Naive thymus-derived CD4-positive, alpha-beta T cell (primary cell): ENCODE measurements at regions of chr5 and their contacts with region 1.

Region 1: DNA sequence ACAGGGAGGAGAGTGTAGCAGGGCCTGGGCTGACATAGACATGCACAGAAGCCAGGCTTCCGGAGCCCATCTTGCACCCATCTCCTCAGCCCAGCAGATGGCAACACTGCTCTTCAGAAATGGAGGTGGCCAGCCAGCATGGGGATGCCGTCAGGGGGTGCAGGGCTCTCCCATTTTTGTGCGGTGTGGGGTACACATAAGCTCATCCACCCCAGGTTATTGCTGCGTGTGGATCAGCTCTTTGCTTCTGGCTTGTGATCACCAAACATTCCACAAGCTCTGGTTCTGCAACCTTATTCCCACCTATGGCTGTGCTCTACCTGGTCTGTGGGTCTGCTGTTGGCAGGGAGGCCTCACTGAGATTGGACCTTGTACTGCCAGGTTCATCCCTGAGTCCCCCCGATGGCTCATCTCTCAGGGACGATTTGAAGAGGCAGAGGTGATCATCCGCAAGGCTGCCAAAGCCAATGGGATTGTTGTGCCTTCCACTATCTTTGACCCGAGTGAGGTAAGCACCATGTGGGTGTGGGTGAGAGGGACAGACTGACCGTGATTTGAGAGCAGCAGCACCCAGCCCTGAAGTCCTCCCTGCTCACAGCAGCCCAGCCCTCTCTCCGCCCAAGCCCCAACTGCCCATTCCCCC is 17.3 kb downstream of the SLC22A5 start:
- DNase-seq: peak; percentile 60 to 81 (median 74)
- ATAC-seq: peak; percentile 88
- H3K4me3 ChIP-seq: no peak overlapping the region
- H3K4me3 Mint-ChIP-seq: peak overlapping the region in 3 of 10 donors; percentile 7 to 47 (median 22)
- H3K27ac ChIP-seq: no peak overlapping the region
- H3K27ac Mint-ChIP-seq: peak overlapping the region; percentile 1 to 83 (median 41)
- H3K4me1 ChIP-seq: peaks cover 15 to 19% of the 10 kb centered on the region in 2 donors
- H3K4me1 Mint-ChIP-seq: peaks cover 20 to 55% (median 29%) of the 10 kb centered on the region in 7 donors
- H3K27me3 ChIP-seq: no peaks in the 10 kb centered on the region
- H3K27me3 Mint-ChIP-seq: no peaks in the 10 kb centered on the region

Region 2: GRCh38 chr5:132410451-132411381 is 24.0 kb after region 1 on chr5:
- CTCF ChIA-PET with region 1: interaction called, 15 read pairs
- POLR2A ChIA-PET with region 1: interaction called, 25 read pairs
- intact Hi-C with region 1: loop called (anchors 1 kb)
- DNase-seq: peak; percentile 71 to 89 (median 84)
- ATAC-seq: peak; percentile 85
- H3K4me3 ChIP-seq: peak overlapping the region; percentile 81
- H3K4me3 Mint-ChIP-seq: peak overlapping the region; percentile 91 to 99 (median 98)
- H3K27ac ChIP-seq: peak overlapping the region; percentile 98
- H3K27ac Mint-ChIP-seq: peak overlapping the region; percentile 96 to 99 (median 99)
- H3K4me1 ChIP-seq: peaks cover 53 to 65% of the 10 kb centered on the region in 2 donors
- H3K4me1 Mint-ChIP-seq: peaks cover 46 to 86% (median 74%) of the 10 kb centered on the region in 7 donors
- H3K27me3 ChIP-seq: no peaks in the 10 kb centered on the region
- H3K27me3 Mint-ChIP-seq: peaks cover 0 to under 1% (median 0%) of the 10 kb centered on the region in 5 donors

Region 3: GRCh38 chr5:132479111-132479951 is 92.6 kb after region 1 on chr5:
- CTCF ChIA-PET with region 1: interaction called, 16 read pairs
- POLR2A ChIA-PET with region 1: interaction called, 5 read pairs
- intact Hi-C with region 1: no loop called
- DNase-seq: peak in 3 of 9 donors; percentile 12 to 31 (median 29)
- ATAC-seq: no peak
- H3K4me3 ChIP-seq: no peak overlapping the region
- H3K4me3 Mint-ChIP-seq: peak overlapping the region in 4 of 10 donors; percentile 13 to 42 (median 22)
- H3K27ac ChIP-seq: peak overlapping the region; percentile 47
- H3K27ac Mint-ChIP-seq: peak overlapping the region; percentile 85 to 97 (median 92)
- H3K4me1 ChIP-seq: peaks cover 10 to 84% of the 10 kb centered on the region in 2 donors
- H3K4me1 Mint-ChIP-seq: peaks cover 33 to 78% (median 70%) of the 10 kb centered on the region in 7 donors
- H3K27me3 ChIP-seq: no peaks in the 10 kb centered on the region
- H3K27me3 Mint-ChIP-seq: no peaks in the 10 kb centered on the region

Region 4: DNA sequence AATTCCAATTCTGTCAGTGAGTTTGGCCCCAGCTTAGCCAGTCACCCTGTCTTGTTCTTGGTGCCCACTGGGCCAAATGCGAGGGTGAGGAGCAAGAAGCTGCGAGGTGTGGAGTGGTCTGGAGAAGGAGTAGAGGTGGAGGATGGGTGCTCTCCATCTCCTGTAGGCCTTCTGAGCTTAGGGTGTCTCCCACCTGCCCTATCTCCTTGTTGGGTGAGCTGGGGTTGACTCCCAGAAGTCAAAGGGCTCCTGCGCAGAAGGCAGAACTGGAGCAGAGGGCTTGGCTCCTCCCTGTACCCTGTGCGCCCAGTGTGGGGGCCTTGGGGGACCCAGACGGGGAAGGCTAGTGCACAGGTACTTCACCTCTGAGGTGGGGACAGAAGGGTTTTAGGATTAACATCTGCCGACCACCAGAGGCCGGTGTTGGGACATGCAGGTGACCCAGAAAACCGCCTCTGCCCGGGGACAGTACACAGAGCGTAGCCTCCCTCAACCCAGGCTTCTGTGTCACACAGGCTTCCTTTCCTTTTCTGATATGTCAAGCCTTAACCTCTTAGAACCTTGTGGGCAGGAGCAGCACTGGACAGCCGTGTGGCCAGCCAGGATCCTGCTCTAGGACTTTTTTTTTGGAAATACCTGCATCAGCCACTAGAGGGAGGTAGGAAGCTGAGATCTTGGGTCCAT is 139.7 kb after region 1 on chr5:
- CTCF ChIA-PET with region 1: interaction called, 3 read pairs
- POLR2A ChIA-PET with region 1: no interaction called
- intact Hi-C with region 1: loop called in 1 of 2 experiments (anchors 1 kb)
- DNase-seq: peak in 8 of 9 donors; percentile 14 to 67 (median 50)
- ATAC-seq: peak; percentile 81
- H3K4me3 ChIP-seq: no peak overlapping the region
- H3K4me3 Mint-ChIP-seq: peak overlapping the region in 1 of 10 donors; percentile 15
- H3K27ac ChIP-seq: no peak overlapping the region
- H3K27ac Mint-ChIP-seq: no peak overlapping the region
- H3K4me1 ChIP-seq: peaks cover 4% of the 10 kb centered on the region in 2 donors
- H3K4me1 Mint-ChIP-seq: peaks cover 12 to 51% (median 16%) of the 10 kb centered on the region in 7 donors
- H3K27me3 ChIP-seq: no peaks in the 10 kb centered on the region
- H3K27me3 Mint-ChIP-seq: peaks cover 0 to 1% (median under 1%) of the 10 kb centered on the region in 5 donors

Region 5: DNA sequence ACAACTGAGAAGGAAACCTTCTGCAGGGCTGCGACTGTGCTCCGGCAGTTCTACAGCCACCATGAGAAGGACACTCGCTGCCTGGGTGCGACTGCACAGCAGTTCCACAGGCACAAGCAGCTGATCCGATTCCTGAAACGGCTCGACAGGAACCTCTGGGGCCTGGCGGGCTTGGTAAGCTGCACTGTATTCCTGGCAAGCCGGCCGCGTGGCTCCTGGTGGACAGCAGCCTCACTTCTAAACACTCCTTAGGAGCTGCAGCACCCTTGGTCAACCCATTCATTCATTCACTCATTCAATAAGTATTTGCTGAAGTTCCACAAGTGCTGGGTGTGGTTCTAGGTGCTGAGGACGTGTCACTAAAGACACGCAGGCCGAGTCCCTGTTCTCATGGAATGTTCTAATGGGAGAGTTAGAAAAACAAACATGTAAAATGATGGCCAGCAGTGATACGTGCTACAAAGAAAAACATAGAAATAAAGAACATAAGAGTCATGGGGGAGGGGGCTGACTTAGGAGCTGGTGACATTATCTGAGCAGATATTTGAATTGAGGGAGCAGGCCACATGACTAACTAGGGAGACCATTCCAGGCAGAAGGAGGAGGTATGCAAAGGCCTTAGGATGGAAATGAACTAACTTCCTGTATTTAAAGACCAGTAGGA is 293.1 kb after region 1 on chr5:
- CTCF ChIA-PET with region 1: no interaction called
- POLR2A ChIA-PET with region 1: no interaction called
- intact Hi-C with region 1: no loop called
- DNase-seq: no peak
- ATAC-seq: no peak
- H3K4me3 ChIP-seq: no peak overlapping the region
- H3K4me3 Mint-ChIP-seq: no peak overlapping the region
- H3K27ac ChIP-seq: no peak overlapping the region
- H3K27ac Mint-ChIP-seq: peak overlapping the region in 1 of 9 donors; percentile 1
- H3K4me1 ChIP-seq: peaks cover 0 to 17% of the 10 kb centered on the region in 2 donors
- H3K4me1 Mint-ChIP-seq: peaks cover 0 to 30% (median 0%) of the 10 kb centered on the region in 7 donors
- H3K27me3 ChIP-seq: no peaks in the 10 kb centered on the region
- H3K27me3 Mint-ChIP-seq: peaks cover 0 to 3% (median 0%) of the 10 kb centered on the region in 5 donors

Region 6: DNA sequence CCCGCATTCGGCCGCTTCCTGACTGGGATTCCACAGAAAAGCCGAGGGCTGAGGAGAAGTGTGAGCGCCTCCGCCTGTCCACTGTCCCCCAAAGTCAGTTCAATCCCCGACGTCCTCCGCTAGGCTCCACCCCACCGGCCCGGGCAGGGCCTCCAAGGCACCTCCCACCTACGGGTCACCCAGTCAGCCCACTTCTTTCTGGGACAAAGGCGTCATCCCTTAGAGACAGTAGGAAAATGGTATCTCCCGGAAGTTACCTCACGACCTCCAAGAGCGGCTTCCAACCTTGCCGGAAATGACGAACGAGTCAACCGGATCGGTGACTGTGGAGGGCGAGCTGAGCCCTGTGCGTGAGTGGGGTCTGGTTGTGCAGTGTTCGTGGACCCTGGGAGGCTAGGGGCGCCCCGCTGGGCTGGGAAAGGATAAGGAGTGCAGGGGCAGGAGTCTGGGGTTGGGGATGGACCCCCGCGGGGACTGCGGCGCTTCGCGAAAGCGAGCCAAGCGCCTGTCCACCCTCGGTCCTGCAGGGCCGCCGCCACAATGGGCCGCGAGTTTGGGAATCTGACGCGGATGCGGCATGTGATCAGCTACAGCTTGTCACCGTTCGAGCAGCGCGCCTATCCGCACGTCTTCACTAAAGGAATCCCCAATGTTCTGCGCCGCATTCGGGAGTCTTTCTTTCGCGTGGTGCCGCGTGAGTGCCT is 479.7 kb after region 1 on chr5 and contains the starts of genes GDF9 and UQCRQ:
- CTCF ChIA-PET with region 1: no interaction called
- POLR2A ChIA-PET with region 1: no interaction called
- intact Hi-C with region 1: loop called in 1 of 2 experiments (anchors 5 kb)
- DNase-seq: peak; percentile 72 to 97 (median 93)
- ATAC-seq: peak; percentile 99
- H3K4me3 ChIP-seq: peak within 1 kb of the TSS; percentile 98
- H3K4me3 Mint-ChIP-seq: peak within 1 kb of the TSS; percentile 98 to 100 (median 100)
- H3K27ac ChIP-seq: peak within 1 kb of the TSS; percentile 96
- H3K27ac Mint-ChIP-seq: peak within 1 kb of the TSS; percentile 97 to 100 (median 100)
- H3K4me1 ChIP-seq: peaks cover 7 to 12% of the 10 kb centered on the region in 2 donors
- H3K4me1 Mint-ChIP-seq: peaks cover 11 to 36% (median 27%) of the 10 kb centered on the region in 7 donors
- H3K27me3 ChIP-seq: no peaks in the 10 kb centered on the region
- H3K27me3 Mint-ChIP-seq: peaks cover 0 to 8% (median 0%) of the 10 kb centered on the region in 5 donors
- total RNA-seq, gene GDF9: 0.48 to 2.0 (median 1.6) TPM
- total RNA-seq, gene UQCRQ: 101 to 338 (median 110) TPM